ENCODE measurements at regions of chr19 and their contacts with region 1.

Region 1: GRCh38 chr19:10269333-10270179 is 1.4 kb upstream of the ICAM1 start:
- DNase-seq: peak; percentile 90

Region 2: GRCh38 chr19:10390652-10391286 is 121.2 kb after region 1 on chr19:
- in situ Hi-C with region 1: loop called (anchors 10 kb)
- DNase-seq: peak; percentile 75